ENCODE measurements at regions of chr1 and their contacts with region 1.

Region 1: DNA sequence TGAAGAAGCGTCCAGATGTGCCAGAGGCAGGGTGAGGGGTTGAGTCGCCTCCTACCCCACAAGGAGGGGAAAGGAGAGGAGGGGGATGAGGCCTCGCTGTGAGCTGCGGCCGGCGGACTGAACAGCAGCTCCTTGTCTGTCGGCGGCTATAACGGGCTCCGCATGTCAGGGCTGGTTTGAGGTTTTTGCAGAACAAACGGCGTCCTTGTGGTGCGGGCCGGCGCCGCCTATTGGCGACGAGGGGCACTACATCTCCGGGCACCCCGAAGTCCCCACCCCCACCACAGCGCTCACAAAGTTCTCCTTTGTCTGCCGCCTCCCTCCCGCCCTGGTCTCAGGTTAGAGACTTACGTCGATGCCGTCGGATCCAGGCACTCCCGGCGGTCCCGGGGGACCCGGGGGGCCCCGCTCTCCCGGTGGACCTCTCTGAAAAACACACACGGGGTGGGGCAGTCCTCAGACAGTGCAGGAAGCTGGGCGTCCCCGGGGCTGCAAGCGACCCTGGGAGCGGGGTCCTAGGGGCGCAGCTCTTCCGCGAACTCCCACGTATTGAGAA is 1.8 kb downstream of the COL9A2 start:
- DNase-seq: peak; percentile 84 to 86 (median 85)
- H3K4me3 ChIP-seq: peak overlapping the region; percentile 65 to 74
- H3K4me3 Mint-ChIP-seq: peak overlapping the region; percentile 79 to 95 (median 87)
- H3K27ac ChIP-seq: no peak overlapping the region
- H3K27ac Mint-ChIP-seq: peak overlapping the region in 6 of 7 donors; percentile 15 to 72 (median 46)
- H3K4me1 ChIP-seq: peaks cover 44% of the 10 kb centered on the region
- H3K4me1 Mint-ChIP-seq: peaks cover 14 to 67% (median 35%) of the 10 kb centered on the region in 4 donors
- H3K27me3 ChIP-seq: no peaks in the 10 kb centered on the region
- H3K27me3 Mint-ChIP-seq: peaks cover 10 to 18% of the 10 kb centered on the region in 2 donors

Region 2: GRCh38 chr1:40161125-40161887 is 154.0 kb before region 1 on chr1 and contains the start of gene RLF:
- CTCF ChIA-PET with region 1: interaction called, 9 read pairs
- POLR2A ChIA-PET with region 1: interaction called, 3 read pairs
- intact Hi-C with region 1: loop called (anchors 2 kb)
- DNase-seq: peak; percentile 93 to 95 (median 94)
- H3K4me3 ChIP-seq: peak within 1 kb of the TSS; percentile 77 to 94
- H3K4me3 Mint-ChIP-seq: peak within 1 kb of the TSS in 1 of 8 donors; percentile 60
- H3K27ac ChIP-seq: peak within 1 kb of the TSS; percentile 97
- H3K27ac Mint-ChIP-seq: peak within 1 kb of the TSS in 1 of 7 donors; percentile 99
- H3K4me1 ChIP-seq: peaks cover 49% of the 10 kb centered on the region
- H3K4me1 Mint-ChIP-seq: peaks cover 8 to 29% (median 19%) of the 10 kb centered on the region in 4 donors
- H3K27me3 ChIP-seq: no peaks in the 10 kb centered on the region
- H3K27me3 Mint-ChIP-seq: no peaks in the 10 kb centered on the region
- total RNA-seq, gene RLF: 23.0 to 23.4 TPM

Region 3: GRCh38 chr1:40281853-40282252 is 33.5 kb before region 1 on chr1:
- CTCF ChIA-PET with region 1: interaction called, 10 read pairs
- POLR2A ChIA-PET with region 1: no interaction called
- intact Hi-C with region 1: no loop called
- DNase-seq: no peak
- H3K4me3 ChIP-seq: no peak overlapping the region
- H3K4me3 Mint-ChIP-seq: no peak overlapping the region
- H3K27ac ChIP-seq: no peak overlapping the region
- H3K27ac Mint-ChIP-seq: no peak overlapping the region
- H3K4me1 ChIP-seq: no peaks in the 10 kb centered on the region
- H3K4me1 Mint-ChIP-seq: peaks cover 0 to 14% (median 5%) of the 10 kb centered on the region in 4 donors
- H3K27me3 ChIP-seq: no peaks in the 10 kb centered on the region
- H3K27me3 Mint-ChIP-seq: no peaks in the 10 kb centered on the region

Region 4: GRCh38 chr1:40373338-40374283 is 58.3 kb after region 1 on chr1 and contains the start of gene SMAP2:
- CTCF ChIA-PET with region 1: interaction called, 11 read pairs
- POLR2A ChIA-PET with region 1: interaction called, 4 read pairs
- intact Hi-C with region 1: no loop called
- DNase-seq: peak; percentile 94 to 96 (median 96)
- H3K4me3 ChIP-seq: peak within 1 kb of the TSS; percentile 84 to 90
- H3K4me3 Mint-ChIP-seq: peak within 1 kb of the TSS; percentile 98 to 100 (median 99)
- H3K27ac ChIP-seq: peak within 1 kb of the TSS; percentile 96
- H3K27ac Mint-ChIP-seq: peak within 1 kb of the TSS; percentile 97 to 100 (median 99)
- H3K4me1 ChIP-seq: peaks cover 45% of the 10 kb centered on the region
- H3K4me1 Mint-ChIP-seq: peaks cover 31 to 67% (median 49%) of the 10 kb centered on the region in 4 donors
- H3K27me3 ChIP-seq: no peaks in the 10 kb centered on the region
- H3K27me3 Mint-ChIP-seq: peaks cover 0 to 6% of the 10 kb centered on the region in 2 donors
- total RNA-seq, gene SMAP2: 123 TPM

Region 5: DNA sequence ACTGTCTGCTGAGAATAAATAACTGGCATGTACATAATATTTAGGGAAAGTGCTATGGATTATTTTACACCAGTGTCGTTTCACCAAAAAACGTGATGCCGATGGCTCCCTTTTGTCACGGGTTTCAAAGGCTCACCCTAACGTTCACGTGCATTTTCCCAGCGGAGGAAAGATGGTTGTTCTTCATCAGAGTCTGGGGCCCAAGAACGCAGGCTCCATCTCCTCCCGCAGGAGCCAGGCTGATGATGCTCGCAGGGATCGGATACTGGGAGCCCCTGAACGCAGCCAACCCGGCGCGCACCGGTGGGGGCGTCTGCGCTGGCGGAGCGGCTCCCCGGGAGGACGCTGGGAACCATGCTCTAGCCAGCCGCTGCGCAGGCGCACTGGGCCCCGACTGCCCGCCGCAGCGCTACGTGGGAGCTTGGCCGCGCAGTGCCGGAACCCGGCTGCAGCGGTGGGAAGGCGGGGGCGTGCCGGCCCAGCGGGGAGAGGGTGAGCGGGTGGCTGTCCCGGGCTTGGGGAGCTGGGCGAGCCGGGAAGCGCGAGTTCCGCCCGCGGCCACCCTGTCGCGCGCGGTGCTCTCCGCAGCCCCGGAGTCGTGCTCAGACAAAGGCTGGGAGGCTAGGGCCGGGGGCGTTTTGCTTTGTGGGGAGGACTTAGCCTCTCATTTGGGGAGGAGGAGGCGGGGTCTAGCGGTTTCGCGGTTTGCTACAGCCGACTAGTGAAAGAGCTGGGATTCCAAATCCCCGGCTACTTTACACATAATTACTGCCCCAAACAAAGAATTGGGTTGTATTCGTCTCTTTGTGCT is 134.6 kb after region 1 on chr1 and contains the start of gene ZFP69B:
- CTCF ChIA-PET with region 1: no interaction called
- POLR2A ChIA-PET with region 1: no interaction called
- intact Hi-C with region 1: no loop called
- DNase-seq: peak; percentile 81 to 86 (median 82)
- H3K4me3 ChIP-seq: peak within 1 kb of the TSS; percentile 75 to 82
- H3K4me3 Mint-ChIP-seq: peak within 1 kb of the TSS; percentile 86 to 96 (median 93)
- H3K27ac ChIP-seq: peak within 1 kb of the TSS; percentile 55
- H3K27ac Mint-ChIP-seq: peak within 1 kb of the TSS; percentile 76 to 95 (median 89)
- H3K4me1 ChIP-seq: peaks cover 18% of the 10 kb centered on the region
- H3K4me1 Mint-ChIP-seq: peaks cover 18 to 25% (median 21%) of the 10 kb centered on the region in 4 donors
- H3K27me3 ChIP-seq: no peaks in the 10 kb centered on the region
- H3K27me3 Mint-ChIP-seq: no peaks in the 10 kb centered on the region
- total RNA-seq, gene ZFP69B: 7.5 to 7.9 TPM